Activated CD4-positive, alpha-beta T cell treated with anti-CD3 and anti-CD28 coated beads for 36 hours (primary cell): ENCODE measurements at regions of chr21 and their contacts with region 1.

Region 1: DNA sequence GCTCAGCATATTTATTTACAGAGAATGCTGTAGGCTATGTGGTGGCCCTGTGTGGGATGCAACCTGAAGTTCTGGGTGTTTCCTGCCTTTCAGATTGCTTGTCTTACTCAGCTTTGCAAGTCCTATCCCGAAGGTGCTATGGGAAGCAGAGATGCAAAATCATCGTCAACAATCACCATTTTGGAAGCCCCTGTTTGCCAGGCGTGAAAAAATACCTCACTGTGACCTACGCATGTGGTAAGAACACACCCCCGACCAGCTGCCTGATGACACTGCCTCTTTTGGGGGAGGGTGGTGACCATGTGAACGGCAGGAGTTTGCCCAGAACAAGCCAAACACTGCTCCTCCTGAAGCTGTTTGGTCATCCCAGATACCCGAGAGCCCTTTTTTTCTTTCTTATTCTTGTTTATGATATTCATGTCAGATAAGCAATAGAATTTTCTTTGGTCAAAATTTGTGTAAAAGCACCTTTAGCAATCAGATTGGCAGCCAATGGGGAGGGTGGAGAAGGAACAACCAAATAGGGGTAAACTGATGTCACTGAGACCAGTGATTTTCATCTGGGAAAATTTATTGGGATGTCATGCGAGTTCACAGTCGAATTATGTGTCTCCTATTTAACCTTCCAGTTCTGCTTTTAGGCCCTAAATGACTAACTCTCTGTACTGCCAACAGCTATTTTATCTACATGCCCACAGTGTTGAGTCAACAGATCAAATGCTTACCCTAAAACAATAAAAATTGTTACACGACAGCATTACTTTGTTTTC is 82.6 kb downstream of the EVA1C start:
- DNase-seq: no peak
- ATAC-seq: no peak
- H3K4me3 Mint-ChIP-seq: no peak overlapping the region
- H3K27ac Mint-ChIP-seq: no peak overlapping the region
- H3K4me1 Mint-ChIP-seq: peaks cover 30% of the 10 kb centered on the region
- H3K27me3 Mint-ChIP-seq: no peaks in the 10 kb centered on the region

Region 2: DNA sequence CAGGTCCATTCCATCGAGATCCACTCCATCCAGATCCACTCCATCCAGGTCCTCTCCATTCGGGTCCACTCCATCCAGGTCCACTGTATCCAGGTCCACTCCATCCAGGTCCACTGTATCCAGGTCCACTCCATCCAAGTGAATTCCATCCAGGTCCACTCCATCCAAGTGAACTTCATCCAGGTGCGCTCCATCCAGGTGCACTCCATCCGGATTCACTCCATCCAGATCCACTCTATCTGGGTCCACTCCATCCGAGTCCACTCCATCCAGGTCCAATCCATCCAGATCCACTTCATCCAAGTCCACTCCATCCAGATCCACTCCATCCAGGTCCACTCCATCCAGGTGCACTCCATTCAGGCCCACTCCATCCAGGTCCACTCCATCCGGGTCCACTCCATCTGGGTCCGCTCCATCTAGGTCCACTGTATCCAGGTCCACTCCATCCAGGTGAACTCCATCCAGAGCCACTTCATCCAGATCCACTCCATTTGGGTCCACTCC is 464.9 kb before region 1 on chr21:
- CTCF ChIA-PET with region 1: no interaction called
- POLR2A ChIA-PET with region 1: no interaction called
- intact Hi-C with region 1: no loop called
- DNase-seq: no peak
- ATAC-seq: no peak
- H3K4me3 Mint-ChIP-seq: no peak overlapping the region
- H3K27ac Mint-ChIP-seq: no peak overlapping the region
- H3K4me1 Mint-ChIP-seq: no peaks in the 10 kb centered on the region
- H3K27me3 Mint-ChIP-seq: peaks cover 3% of the 10 kb centered on the region

Region 3: GRCh38 chr21:32278518-32279376 is 216.4 kb before region 1 on chr21 and contains the start of gene MIS18A:
- CTCF ChIA-PET with region 1: no interaction called
- POLR2A ChIA-PET with region 1: interaction called, 3 read pairs
- intact Hi-C with region 1: loop called in 1 of 2 experiments (anchors 1 kb)
- DNase-seq: peak; percentile 98
- ATAC-seq: peak; percentile 90
- H3K4me3 Mint-ChIP-seq: peak within 1 kb of the TSS; percentile 86
- H3K27ac Mint-ChIP-seq: peak within 1 kb of the TSS; percentile 84
- H3K4me1 Mint-ChIP-seq: peaks cover 17% of the 10 kb centered on the region
- H3K27me3 Mint-ChIP-seq: no peaks in the 10 kb centered on the region
- total RNA-seq, gene MIS18A: 21.5 to 35.3 TPM

Region 4: DNA sequence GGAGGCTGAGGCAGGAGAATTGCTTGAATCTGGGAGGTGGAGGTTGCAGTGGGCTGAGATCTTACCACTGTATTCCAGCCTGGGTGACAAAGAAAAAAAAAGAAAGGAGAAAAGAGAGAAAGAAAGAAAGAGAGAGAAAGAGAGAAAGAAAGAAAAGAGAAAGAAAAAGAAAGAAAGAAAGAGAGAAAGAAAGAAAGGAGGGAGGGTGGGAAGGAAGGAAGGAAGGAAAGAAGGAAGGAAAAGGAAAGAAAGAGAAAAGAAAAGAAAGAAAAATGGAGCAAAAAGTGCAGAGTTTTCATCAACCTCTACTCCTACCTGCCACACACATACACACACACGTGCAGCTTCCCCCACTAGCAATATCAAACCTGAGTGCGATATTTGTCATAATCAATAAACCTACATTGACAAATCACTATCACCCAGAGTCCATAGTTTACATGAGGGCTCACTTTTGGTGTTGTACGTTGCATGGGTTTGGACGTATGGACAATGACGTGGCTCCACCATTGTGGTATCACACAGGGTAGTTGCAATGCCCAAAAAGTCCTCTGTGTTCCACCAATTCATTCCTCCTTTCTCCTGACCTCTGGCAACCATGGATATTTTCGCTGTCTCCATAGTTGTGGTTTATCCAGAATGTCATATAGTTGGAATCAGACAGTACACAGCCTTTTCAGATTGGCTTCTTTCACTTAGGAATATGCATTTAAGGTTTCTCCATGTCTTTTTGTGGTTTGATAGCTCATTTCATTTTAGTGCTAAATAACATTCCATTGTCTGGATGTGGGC is 46.1 kb before region 1 on chr21:
- CTCF ChIA-PET with region 1: no interaction called
- POLR2A ChIA-PET with region 1: no interaction called
- intact Hi-C with region 1: no loop called
- DNase-seq: no peak
- ATAC-seq: no peak
- H3K4me3 Mint-ChIP-seq: no peak overlapping the region
- H3K27ac Mint-ChIP-seq: no peak overlapping the region
- H3K4me1 Mint-ChIP-seq: no peaks in the 10 kb centered on the region
- H3K27me3 Mint-ChIP-seq: no peaks in the 10 kb centered on the region

Region 5: DNA sequence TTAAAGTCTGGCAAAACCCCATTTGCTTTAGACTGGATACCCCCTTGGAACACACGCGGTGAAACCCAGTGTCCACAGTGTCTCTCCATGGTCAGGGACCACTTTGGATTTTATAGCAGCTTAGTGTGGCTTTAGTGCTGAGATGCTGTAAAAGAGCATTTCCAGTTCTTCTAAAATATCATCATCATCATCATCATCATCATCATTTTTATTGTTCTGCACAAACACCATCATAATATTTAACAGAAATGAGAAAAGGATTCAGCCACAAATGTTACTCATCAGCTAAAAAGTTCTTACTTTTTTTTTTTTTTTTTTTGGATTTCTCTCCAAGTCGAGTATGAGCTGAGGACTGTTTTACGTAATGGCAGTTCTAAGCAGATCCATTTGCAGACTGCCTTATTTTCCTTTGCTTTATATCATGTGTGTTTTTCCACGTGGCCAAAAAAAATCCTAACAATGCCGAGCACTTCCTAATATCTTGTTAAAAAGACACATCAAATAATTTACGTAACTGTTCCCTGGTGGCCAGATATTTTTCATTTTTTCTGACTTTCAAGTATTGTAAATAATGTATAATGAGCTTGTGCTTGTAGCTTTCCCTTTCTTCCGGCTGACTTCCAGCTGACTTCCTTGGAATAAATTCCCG is 19.8 kb before region 1 on chr21:
- CTCF ChIA-PET with region 1: no interaction called
- POLR2A ChIA-PET with region 1: no interaction called
- intact Hi-C with region 1: loop called in 1 of 2 experiments (anchors 1 kb)
- DNase-seq: no peak
- ATAC-seq: no peak
- H3K4me3 Mint-ChIP-seq: no peak overlapping the region
- H3K27ac Mint-ChIP-seq: no peak overlapping the region
- H3K4me1 Mint-ChIP-seq: peaks cover 7% of the 10 kb centered on the region
- H3K27me3 Mint-ChIP-seq: no peaks in the 10 kb centered on the region

Region 6: DNA sequence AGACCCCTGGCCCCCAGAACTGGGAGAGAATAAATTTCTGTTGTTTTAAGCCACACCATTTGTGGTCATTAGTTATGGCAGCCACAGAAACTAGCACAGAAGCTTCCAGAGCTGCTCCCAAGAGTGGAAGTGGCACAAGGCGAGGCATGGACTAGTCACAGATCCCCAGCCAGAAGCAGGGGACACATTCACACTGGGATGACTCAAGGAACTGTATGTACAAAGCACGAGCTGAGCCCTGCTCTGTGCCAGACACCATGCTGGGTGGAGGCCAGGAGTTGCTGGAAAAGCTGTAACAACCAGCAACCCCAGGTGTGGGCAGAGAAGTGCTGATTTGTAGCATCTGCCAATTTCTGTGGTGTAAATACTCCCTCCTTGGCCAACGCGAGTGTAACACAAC is 34.6 kb after region 1 on chr21:
- CTCF ChIA-PET with region 1: no interaction called
- POLR2A ChIA-PET with region 1: no interaction called
- intact Hi-C with region 1: no loop called
- DNase-seq: no peak
- ATAC-seq: no peak
- H3K4me3 Mint-ChIP-seq: no peak overlapping the region
- H3K27ac Mint-ChIP-seq: no peak overlapping the region
- H3K4me1 Mint-ChIP-seq: no peaks in the 10 kb centered on the region
- H3K27me3 Mint-ChIP-seq: no peaks in the 10 kb centered on the region

Region 7: GRCh38 chr21:32612075-32612998 is 117.2 kb after region 1 on chr21 and contains the start of gene CFAP298:
- CTCF ChIA-PET with region 1: no interaction called
- POLR2A ChIA-PET with region 1: no interaction called
- intact Hi-C with region 1: loop called in 1 of 2 experiments (anchors 1 kb)
- DNase-seq: peak; percentile 92
- ATAC-seq: peak; percentile 90
- H3K4me3 Mint-ChIP-seq: peak within 1 kb of the TSS; percentile 96
- H3K27ac Mint-ChIP-seq: peak within 1 kb of the TSS; percentile 90
- H3K4me1 Mint-ChIP-seq: peaks cover 9% of the 10 kb centered on the region
- H3K27me3 Mint-ChIP-seq: no peaks in the 10 kb centered on the region
- total RNA-seq, gene CFAP298: 39.5 to 47.9 TPM

Region 8: DNA sequence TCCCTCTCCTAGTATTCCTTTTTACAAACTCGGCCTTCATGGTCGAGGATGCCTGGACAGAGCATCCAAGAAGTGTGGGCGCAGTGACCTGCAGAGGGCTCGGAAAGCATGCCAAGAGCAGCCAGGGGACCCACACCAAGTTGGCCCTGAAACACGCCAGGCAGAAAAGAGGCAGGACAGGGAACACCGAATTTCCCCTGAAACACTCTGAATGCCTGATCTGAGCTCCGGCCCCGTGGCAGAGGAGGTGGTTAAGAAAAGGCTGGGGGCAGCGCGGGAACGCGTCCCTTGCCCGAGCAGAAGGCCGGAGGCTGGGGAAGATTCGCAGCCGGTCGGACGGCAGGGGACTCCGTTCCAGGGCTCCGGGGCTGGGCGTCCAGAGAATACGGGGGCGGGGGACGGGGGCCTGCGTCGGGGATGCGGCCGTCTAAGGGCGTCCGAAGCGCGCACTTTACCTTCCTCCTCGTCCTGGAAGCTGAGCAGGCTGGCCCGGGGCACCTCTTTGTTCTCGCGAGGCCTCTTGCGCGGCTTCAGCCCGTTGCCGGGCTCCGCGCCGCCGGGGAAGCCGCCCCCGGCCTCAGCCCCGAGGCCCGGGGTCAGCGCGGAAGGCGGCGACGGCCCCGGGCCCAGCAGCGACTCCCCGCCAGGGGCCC is 275.9 kb after region 1 on chr21:
- CTCF ChIA-PET with region 1: no interaction called
- POLR2A ChIA-PET with region 1: no interaction called
- intact Hi-C with region 1: loop called in 1 of 2 experiments (anchors 1 kb)
- DNase-seq: peak; percentile 76
- ATAC-seq: peak; percentile 17
- H3K4me3 Mint-ChIP-seq: peak overlapping the region; percentile 99
- H3K27ac Mint-ChIP-seq: peak overlapping the region; percentile 96
- H3K4me1 Mint-ChIP-seq: peaks cover 54% of the 10 kb centered on the region
- H3K27me3 Mint-ChIP-seq: no peaks in the 10 kb centered on the region